MCF 10A (cell line): ENCODE measurements at regions of chr4 and their contacts with region 1.

Region 1: GRCh38 chr4:67327262-67328017 is 217.9 kb downstream of the CENPC start:
- DNase-seq: peak; percentile 78
- H3K4me3 Mint-ChIP-seq: no peak overlapping the region
- H3K27ac Mint-ChIP-seq: peak overlapping the region; percentile 57
- H3K4me1 Mint-ChIP-seq: peaks cover 6% of the 10 kb centered on the region
- H3K27me3 Mint-ChIP-seq: peaks cover 15% of the 10 kb centered on the region
- CTCF ChIP-seq: peak; percentile 85

Region 2: GRCh38 chr4:66688674-66689073 is 638.8 kb before region 1 on chr4:
- CTCF ChIA-PET with region 1: interaction called, 3 read pairs
- POLR2A ChIA-PET with region 1: no interaction called
- intact Hi-C with region 1: loop called (anchors 2 kb)
- DNase-seq: peak; percentile 33
- H3K4me3 Mint-ChIP-seq: no peak overlapping the region
- H3K27ac Mint-ChIP-seq: no peak overlapping the region
- H3K4me1 Mint-ChIP-seq: no peaks in the 10 kb centered on the region
- H3K27me3 Mint-ChIP-seq: no peaks in the 10 kb centered on the region
- CTCF ChIP-seq: peak; percentile 29

Region 3: GRCh38 chr4:66777097-66777496 is 550.3 kb before region 1 on chr4:
- CTCF ChIA-PET with region 1: interaction called, 6 read pairs
- POLR2A ChIA-PET with region 1: no interaction called
- intact Hi-C with region 1: loop called (anchors 10 kb)
- DNase-seq: peak; percentile 6
- H3K4me3 Mint-ChIP-seq: no peak overlapping the region
- H3K27ac Mint-ChIP-seq: no peak overlapping the region
- H3K4me1 Mint-ChIP-seq: no peaks in the 10 kb centered on the region
- H3K27me3 Mint-ChIP-seq: no peaks in the 10 kb centered on the region
- CTCF ChIP-seq: peak; percentile 18

Region 4: DNA sequence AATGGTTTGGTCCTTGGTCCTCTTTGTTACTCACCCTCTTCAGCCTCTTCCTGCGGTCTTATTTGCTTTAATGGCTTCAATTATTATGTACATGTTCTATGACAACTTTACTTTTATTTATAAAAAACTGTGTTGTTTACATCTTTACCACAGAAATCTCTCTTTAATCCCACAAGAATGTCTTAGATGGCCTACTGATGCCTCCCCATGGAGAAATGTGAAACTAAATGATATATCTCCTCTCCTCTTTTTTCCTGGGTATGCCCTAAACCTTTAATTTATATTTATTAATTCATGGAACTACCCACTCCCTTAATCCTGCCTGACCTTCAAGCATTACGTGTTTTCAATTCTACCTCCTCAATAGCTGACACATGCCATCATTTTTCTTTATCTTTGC is 355.4 kb before region 1 on chr4:
- CTCF ChIA-PET with region 1: no interaction called
- POLR2A ChIA-PET with region 1: interaction called, 5 read pairs
- intact Hi-C with region 1: loop called (anchors 2 kb)
- DNase-seq: no peak
- H3K4me3 Mint-ChIP-seq: no peak overlapping the region
- H3K27ac Mint-ChIP-seq: no peak overlapping the region
- H3K4me1 Mint-ChIP-seq: no peaks in the 10 kb centered on the region
- H3K27me3 Mint-ChIP-seq: no peaks in the 10 kb centered on the region
- CTCF ChIP-seq: peak; percentile 15

Region 5: GRCh38 chr4:67087897-67088296 is 239.5 kb before region 1 on chr4:
- CTCF ChIA-PET with region 1: interaction called, 12 read pairs
- POLR2A ChIA-PET with region 1: no interaction called
- intact Hi-C with region 1: loop called (anchors 1 kb)
- DNase-seq: peak; percentile 64
- H3K4me3 Mint-ChIP-seq: no peak overlapping the region
- H3K27ac Mint-ChIP-seq: no peak overlapping the region
- H3K4me1 Mint-ChIP-seq: no peaks in the 10 kb centered on the region
- H3K27me3 Mint-ChIP-seq: no peaks in the 10 kb centered on the region
- CTCF ChIP-seq: peak; percentile 61

Region 6: GRCh38 chr4:67122029-67122428 is 205.4 kb before region 1 on chr4:
- CTCF ChIA-PET with region 1: no interaction called
- POLR2A ChIA-PET with region 1: no interaction called
- intact Hi-C with region 1: loop called (anchors 1 kb)
- DNase-seq: peak; percentile 48
- H3K4me3 Mint-ChIP-seq: no peak overlapping the region
- H3K27ac Mint-ChIP-seq: no peak overlapping the region
- H3K4me1 Mint-ChIP-seq: no peaks in the 10 kb centered on the region
- H3K27me3 Mint-ChIP-seq: no peaks in the 10 kb centered on the region
- CTCF ChIP-seq: peak; percentile 39

Region 7: DNA sequence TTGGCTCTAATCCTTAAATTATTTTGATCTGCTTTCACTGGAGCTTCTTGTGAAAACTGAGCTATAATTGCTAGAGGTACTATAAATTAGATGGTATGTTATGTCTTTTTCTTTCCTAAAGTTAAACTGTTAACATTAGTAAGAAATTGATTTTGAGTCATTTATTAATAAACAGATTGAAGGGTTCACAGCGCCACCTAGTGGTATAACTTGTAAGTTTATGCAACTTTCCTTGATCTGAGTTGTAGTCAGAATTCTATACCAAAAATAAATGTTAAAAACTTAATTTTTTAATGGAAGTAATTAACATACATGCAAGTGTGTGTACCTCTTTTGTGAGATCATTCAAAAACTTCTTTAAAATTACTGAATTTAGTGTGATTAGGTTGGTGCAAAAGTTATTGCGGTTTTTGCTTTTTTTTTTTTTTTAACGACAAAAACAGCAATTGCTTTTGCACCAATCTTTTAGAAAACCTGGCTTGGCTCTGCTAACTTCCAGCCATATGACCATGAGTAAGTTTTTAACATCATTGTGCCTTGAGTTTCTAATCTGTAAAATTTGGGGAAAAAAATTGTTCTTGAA is 66.3 kb after region 1 on chr4:
- CTCF ChIA-PET with region 1: interaction called, 18 read pairs
- POLR2A ChIA-PET with region 1: interaction called, 3 read pairs
- intact Hi-C with region 1: loop called (anchors 5 kb)
- DNase-seq: peak; percentile 53
- H3K4me3 Mint-ChIP-seq: no peak overlapping the region
- H3K27ac Mint-ChIP-seq: no peak overlapping the region
- H3K4me1 Mint-ChIP-seq: peaks cover 5% of the 10 kb centered on the region
- H3K27me3 Mint-ChIP-seq: peaks cover 12% of the 10 kb centered on the region
- CTCF ChIP-seq: peak; percentile 57